Breast epithelium (tissue), 4 donors: ENCODE measurements at regions of chr19 and their contacts with region 1.

Region 1: DNA sequence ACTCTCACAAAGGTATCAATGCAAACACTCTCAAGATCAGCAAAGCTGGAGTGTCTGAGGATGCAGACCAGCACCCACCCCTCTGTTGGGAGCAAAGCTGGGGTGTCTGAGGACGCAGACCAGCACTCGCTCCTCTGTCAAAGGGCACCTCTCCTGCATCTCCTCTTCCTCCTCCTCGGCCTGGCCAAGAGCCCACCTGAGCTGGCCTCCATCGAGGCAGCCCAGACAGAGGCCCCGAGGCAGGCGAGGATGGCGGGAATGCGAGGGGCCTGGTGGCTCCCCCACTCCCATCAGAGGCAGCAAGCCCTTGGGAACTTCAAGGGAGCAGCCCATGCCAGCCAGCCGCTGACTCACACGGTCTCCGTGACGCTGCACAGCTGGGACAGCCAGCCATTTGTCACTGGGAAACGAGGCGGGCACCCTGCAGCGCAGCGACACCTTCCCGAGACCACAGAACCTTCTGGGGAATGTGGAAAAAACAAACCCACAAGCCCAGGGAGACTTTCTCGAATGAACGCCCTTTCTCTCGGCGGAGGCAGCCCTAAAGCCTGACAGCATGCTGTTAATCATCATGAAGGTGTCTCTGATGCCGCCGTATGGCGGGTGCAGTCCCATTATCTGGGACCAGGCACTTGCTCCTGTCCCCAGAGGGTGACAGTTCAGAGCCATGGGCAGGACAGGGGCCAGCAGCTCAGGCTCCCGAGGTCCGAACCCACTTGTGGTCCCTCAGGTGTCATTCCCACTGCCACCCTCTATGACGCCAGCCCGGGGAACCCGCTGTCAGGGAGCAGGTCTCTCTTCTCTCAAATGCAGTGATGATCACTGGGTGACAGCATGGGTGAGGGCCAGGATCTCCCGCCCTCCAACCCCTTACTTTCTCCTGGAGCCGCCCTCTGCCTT is 53.1 kb downstream of the PEPD start:
- DNase-seq: peak in 1 of 2 donors; percentile 35
- H3K4me3 ChIP-seq: no peak overlapping the region
- H3K27ac ChIP-seq: no peak overlapping the region
- H3K4me1 ChIP-seq: no peaks in the 10 kb centered on the region
- H3K27me3 ChIP-seq: no peaks in the 10 kb centered on the region
- CTCF ChIP-seq: no peak
- POLR2A ChIP-seq: no peak

Region 2: DNA sequence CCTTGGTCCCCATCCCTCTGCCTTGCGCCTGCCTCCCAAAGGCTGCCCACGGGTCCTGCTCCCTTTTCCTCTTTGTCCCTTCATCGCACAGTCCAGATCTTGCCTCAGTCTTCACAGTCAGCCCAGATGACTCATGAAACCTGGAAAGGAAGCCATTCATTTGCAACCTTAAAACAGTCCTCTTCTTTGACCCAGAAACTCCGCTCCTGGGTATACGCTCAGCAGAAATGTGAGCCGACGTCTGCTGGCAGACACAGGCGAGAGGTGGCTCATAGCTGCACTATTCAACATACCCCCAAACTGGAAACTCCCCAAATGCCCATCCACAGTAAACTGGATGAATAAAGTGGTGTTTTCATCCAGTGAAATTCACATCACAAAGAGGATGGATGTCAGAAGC is 66.7 kb after region 1 on chr19:
- intact Hi-C with region 1: loop called (anchors 10 kb)
- DNase-seq: no peak
- H3K4me3 ChIP-seq: no peak overlapping the region
- H3K27ac ChIP-seq: no peak overlapping the region
- H3K4me1 ChIP-seq: no peaks in the 10 kb centered on the region
- H3K27me3 ChIP-seq: peaks cover 0 to 31% of the 10 kb centered on the region in 2 donors
- CTCF ChIP-seq: no peak
- POLR2A ChIP-seq: no peak